ENCODE measurements at regions of chr7 and their contacts with region 1.

Region 1: GRCh38 chr7:101465576-101466196 is 103.0 kb downstream of the COL26A1 start:
- DNase-seq: no peak
- H3K4me3 Mint-ChIP-seq: no peak overlapping the region
- H3K27ac Mint-ChIP-seq: no peak overlapping the region
- H3K4me1 Mint-ChIP-seq: no peaks in the 10 kb centered on the region
- H3K27me3 Mint-ChIP-seq: peaks cover 64% of the 10 kb centered on the region
- CTCF ChIP-seq: no peak

Region 2: DNA sequence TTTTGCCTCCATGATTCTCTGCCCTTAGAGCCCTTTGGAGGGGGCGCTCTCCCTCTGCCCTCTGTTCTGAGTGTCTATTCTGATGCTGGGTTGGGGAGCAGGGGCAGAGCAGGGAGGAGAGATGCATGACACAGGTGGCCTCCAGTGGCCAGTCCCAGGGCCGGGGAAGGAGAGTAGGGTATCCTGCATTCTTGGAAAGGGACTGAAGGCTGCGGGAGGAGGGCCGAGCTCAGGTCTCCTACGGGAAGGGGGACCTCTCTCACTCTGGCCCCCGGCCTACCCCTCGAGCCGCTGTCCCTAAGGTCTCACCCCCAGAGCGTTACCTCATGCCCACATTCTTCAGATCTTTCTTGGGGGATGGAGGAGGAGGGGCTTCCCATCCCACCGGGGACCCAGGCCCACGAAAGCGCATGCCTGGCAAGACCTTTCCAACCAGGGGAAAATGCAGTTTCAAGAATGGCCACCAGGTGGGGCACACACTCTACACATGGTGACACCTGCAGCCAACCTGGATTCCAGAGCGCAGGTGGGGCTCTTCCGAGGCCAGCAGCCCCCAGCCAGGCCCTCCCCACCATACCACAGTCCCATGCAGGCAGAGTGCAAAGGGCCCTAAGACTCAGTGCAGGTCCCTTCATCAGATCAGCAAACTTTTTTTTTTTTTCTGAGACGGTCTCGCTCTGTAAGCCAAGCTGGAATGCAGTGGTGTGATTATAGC is 77.0 kb after region 1 on chr7:
- CTCF ChIA-PET with region 1: no interaction called
- POLR2A ChIA-PET with region 1: no interaction called
- intact Hi-C with region 1: loop called (anchors 2 kb)
- DNase-seq: peak; percentile 73
- H3K4me3 Mint-ChIP-seq: no peak overlapping the region
- H3K27ac Mint-ChIP-seq: no peak overlapping the region
- H3K4me1 Mint-ChIP-seq: peaks cover 1% of the 10 kb centered on the region
- H3K27me3 Mint-ChIP-seq: no peaks in the 10 kb centered on the region
- CTCF ChIP-seq: peak; percentile 92